Endothelial cell of umbilical vein (primary cell): ENCODE measurements at regions of chr17 and their contacts with region 1.

Region 1: GRCh38 chr17:1055751-1056645 is 59.1 kb downstream of the TIMM22 start:
- DNase-seq: peak; percentile 66
- H3K4me3 ChIP-seq: no peak overlapping the region
- H3K27ac ChIP-seq: no peak overlapping the region
- H3K4me1 ChIP-seq: no peaks in the 10 kb centered on the region
- H3K27me3 ChIP-seq: no peaks in the 10 kb centered on the region
- CTCF ChIP-seq: peak; percentile 58 to 81
- POLR2A ChIP-seq: no peak

Region 2: DNA sequence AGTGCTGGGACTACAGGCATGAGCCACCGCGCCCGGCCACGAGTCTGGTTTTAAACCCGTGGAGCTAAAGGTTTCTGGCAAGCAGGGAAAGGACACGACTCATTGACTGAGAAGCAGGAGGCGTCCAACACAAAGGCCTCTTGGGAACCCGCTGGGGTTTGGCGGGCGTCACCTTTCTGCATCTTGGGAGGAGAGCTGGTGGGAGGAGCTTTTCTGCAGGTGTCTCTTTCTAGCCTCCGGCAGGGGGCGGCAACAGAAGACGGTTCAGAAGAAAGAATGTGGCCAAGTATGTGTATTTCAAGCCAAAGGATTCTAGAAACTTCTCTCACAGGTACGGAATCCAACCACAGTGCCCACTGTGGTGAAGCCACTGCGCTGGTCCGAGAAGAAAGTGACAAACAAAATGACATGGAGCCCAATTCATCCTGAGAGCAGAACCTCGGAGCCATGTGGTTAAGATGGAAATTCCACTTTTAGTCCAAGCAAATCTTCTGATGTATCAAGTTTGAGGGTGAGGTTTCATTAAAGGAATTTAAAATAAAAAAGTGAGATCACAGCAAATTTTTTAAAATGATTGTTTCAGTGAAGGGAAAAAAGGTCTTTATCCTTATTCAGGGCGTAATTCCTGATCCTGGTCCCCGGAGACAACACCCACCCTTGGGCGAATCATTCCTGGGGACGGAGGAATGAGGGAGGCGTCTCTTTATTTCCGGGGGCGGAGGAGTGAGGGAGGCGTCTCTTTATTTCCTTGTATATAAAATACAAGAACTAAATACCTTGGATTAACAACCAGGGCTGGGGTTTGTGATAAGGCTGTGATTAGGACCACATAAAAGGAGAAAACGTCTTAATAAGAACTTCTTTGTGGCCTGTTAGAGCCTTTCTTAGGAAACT is 176.2 kb before region 1 on chr17:
- CTCF ChIA-PET with region 1: interaction called, 41 read pairs
- POLR2A ChIA-PET with region 1: no interaction called
- dilution Hi-C with region 1: no loop called
- intact Hi-C with region 1: no loop called
- DNase-seq: peak; percentile 85
- H3K4me3 ChIP-seq: peak overlapping the region in 1 of 3 experiments; percentile 56
- H3K27ac ChIP-seq: peak overlapping the region; percentile 95
- H3K4me1 ChIP-seq: peaks cover 23% of the 10 kb centered on the region
- H3K27me3 ChIP-seq: no peaks in the 10 kb centered on the region
- CTCF ChIP-seq: peak; percentile 68 to 75
- POLR2A ChIP-seq: no peak

Region 3: GRCh38 chr17:1039511-1040215 is 16.3 kb before region 1 on chr17:
- CTCF ChIA-PET with region 1: interaction called, 79 read pairs
- POLR2A ChIA-PET with region 1: no interaction called
- dilution Hi-C with region 1: no loop called
- intact Hi-C with region 1: loop called (anchors 2 kb)
- DNase-seq: peak; percentile 84
- H3K4me3 ChIP-seq: no peak overlapping the region
- H3K27ac ChIP-seq: peak overlapping the region; percentile 80
- H3K4me1 ChIP-seq: peaks cover 30% of the 10 kb centered on the region
- H3K27me3 ChIP-seq: no peaks in the 10 kb centered on the region
- CTCF ChIP-seq: no peak
- POLR2A ChIP-seq: no peak

Region 4: GRCh38 chr17:1116602-1117001 is 60.6 kb after region 1 on chr17:
- CTCF ChIA-PET with region 1: interaction called, 106 read pairs
- POLR2A ChIA-PET with region 1: no interaction called
- dilution Hi-C with region 1: no loop called
- intact Hi-C with region 1: loop called (anchors 2 kb)
- DNase-seq: no peak
- H3K4me3 ChIP-seq: no peak overlapping the region
- H3K27ac ChIP-seq: no peak overlapping the region
- H3K4me1 ChIP-seq: peaks cover 21% of the 10 kb centered on the region
- H3K27me3 ChIP-seq: no peaks in the 10 kb centered on the region
- CTCF ChIP-seq: no peak
- POLR2A ChIP-seq: no peak

Region 5: GRCh38 chr17:1164935-1165556 is 109.0 kb after region 1 on chr17:
- CTCF ChIA-PET with region 1: interaction called, 16 read pairs
- POLR2A ChIA-PET with region 1: no interaction called
- dilution Hi-C with region 1: no loop called
- intact Hi-C with region 1: no loop called
- DNase-seq: peak; percentile 29
- H3K4me3 ChIP-seq: no peak overlapping the region
- H3K27ac ChIP-seq: no peak overlapping the region
- H3K4me1 ChIP-seq: peaks cover 14% of the 10 kb centered on the region
- H3K27me3 ChIP-seq: no peaks in the 10 kb centered on the region
- CTCF ChIP-seq: peak; percentile 11 to 25
- POLR2A ChIP-seq: no peak

Region 6: GRCh38 chr17:1255041-1255440 is 199.0 kb after region 1 on chr17:
- CTCF ChIA-PET with region 1: interaction called, 25 read pairs
- POLR2A ChIA-PET with region 1: no interaction called
- dilution Hi-C with region 1: no loop called
- intact Hi-C with region 1: no loop called
- DNase-seq: no peak
- H3K4me3 ChIP-seq: no peak overlapping the region
- H3K27ac ChIP-seq: no peak overlapping the region
- H3K4me1 ChIP-seq: no peaks in the 10 kb centered on the region
- H3K27me3 ChIP-seq: peaks cover 2 to 3% of the 10 kb centered on the region in 2 experiments
- CTCF ChIP-seq: no peak
- POLR2A ChIP-seq: no peak

Region 7: GRCh38 chr17:1490643-1491442 is 434.8 kb after region 1 on chr17:
- CTCF ChIA-PET with region 1: no interaction called
- POLR2A ChIA-PET with region 1: no interaction called
- dilution Hi-C with region 1: no loop called
- intact Hi-C with region 1: no loop called
- DNase-seq: peak; percentile 59
- H3K4me3 ChIP-seq: peak overlapping the region; percentile 1 to 54 (median 12)
- H3K27ac ChIP-seq: peak overlapping the region; percentile 4
- H3K4me1 ChIP-seq: peaks cover 42% of the 10 kb centered on the region
- H3K27me3 ChIP-seq: no peaks in the 10 kb centered on the region
- CTCF ChIP-seq: no peak
- POLR2A ChIP-seq: peak; percentile 51